IMR-90 (cell line): ENCODE measurements at regions of chr4 and their contacts with region 1.

Region 1: GRCh38 chr4:145481164-145481941 is at the start of gene SMAD1:
- DNase-seq: peak; percentile 82
- ATAC-seq: peak; percentile 89
- H3K4me3 ChIP-seq: peak within 1 kb of the TSS; percentile 56
- H3K27ac ChIP-seq: peak within 1 kb of the TSS; percentile 83
- H3K4me1 ChIP-seq: peaks cover 2% of the 10 kb centered on the region; the same call in 1 of the 2 replicates
- H3K27me3 ChIP-seq: no peaks in the 10 kb centered on the region
- CTCF ChIP-seq: no peak
- POLR2A ChIP-seq: peak; percentile 57; the same call in 1 of the 2 replicates
- RAD21 ChIP-seq: no peak
- total RNA-seq, gene SMAD1: 17.6 and 20.8 TPM in 2 replicates

Region 2: DNA sequence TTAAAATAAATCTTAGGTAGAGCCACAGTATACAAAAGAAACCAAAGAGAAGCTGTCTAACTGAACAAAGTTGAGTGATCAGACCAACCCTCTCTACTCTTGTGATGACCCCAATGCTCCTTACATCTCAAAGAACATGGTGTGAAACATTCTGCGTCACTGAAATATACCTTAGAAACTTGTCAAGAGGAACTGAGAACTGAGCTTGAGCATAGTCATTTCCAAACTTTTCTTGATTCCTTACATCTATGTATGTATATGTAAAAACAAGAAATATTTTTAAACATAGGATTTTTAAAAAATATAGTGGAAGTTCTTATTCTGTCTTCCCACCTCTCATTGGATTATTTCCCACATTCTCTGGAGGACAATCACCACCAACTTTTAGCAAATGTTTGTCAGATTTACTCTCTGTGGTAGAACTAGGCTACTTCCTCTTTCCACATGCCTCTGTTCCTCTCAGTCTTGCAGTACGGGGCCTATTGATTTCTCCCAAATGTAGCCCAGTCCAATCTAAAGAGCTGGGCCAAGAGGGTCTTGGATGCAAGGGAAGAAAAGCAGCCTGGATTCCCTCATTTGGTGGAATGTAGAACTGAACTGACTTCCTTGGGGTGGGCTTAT is 933.6 kb before region 1 on chr4:
- CTCF ChIA-PET with region 1: no interaction called
- POLR2A ChIA-PET with region 1: no interaction called
- dilution Hi-C with region 1: no loop called
- in situ Hi-C with region 1: no loop called
- intact Hi-C with region 1: no loop called
- DNase-seq: no peak
- ATAC-seq: no peak
- H3K4me3 ChIP-seq: no peak overlapping the region
- H3K27ac ChIP-seq: no peak overlapping the region
- H3K4me1 ChIP-seq: no peaks in the 10 kb centered on the region
- H3K27me3 ChIP-seq: no peaks in the 10 kb centered on the region; the same call in 1 of the 2 replicates
- CTCF ChIP-seq: no peak
- POLR2A ChIP-seq: no peak
- RAD21 ChIP-seq: no peak

Region 3: GRCh38 chr4:145180298-145181090 is 300.9 kb before region 1 on chr4 and contains the start of gene OTUD4:
- CTCF ChIA-PET with region 1: no interaction called
- POLR2A ChIA-PET with region 1: no interaction called
- dilution Hi-C with region 1: no loop called
- in situ Hi-C with region 1: no loop called
- intact Hi-C with region 1: loop called (anchors 2 kb)
- DNase-seq: peak; percentile 94
- ATAC-seq: peak; percentile 88
- H3K4me3 ChIP-seq: peak within 1 kb of the TSS; percentile 77
- H3K27ac ChIP-seq: peak within 1 kb of the TSS; percentile 88
- H3K4me1 ChIP-seq: no peaks in the 10 kb centered on the region; the same call in 1 of the 2 replicates
- H3K27me3 ChIP-seq: no peaks in the 10 kb centered on the region
- CTCF ChIP-seq: peak; percentile 22; the same call in 1 of the 2 replicates
- POLR2A ChIP-seq: no peak
- RAD21 ChIP-seq: no peak
- total RNA-seq, gene OTUD4: 12.4 and 16.9 TPM in 2 replicates

Region 4: DNA sequence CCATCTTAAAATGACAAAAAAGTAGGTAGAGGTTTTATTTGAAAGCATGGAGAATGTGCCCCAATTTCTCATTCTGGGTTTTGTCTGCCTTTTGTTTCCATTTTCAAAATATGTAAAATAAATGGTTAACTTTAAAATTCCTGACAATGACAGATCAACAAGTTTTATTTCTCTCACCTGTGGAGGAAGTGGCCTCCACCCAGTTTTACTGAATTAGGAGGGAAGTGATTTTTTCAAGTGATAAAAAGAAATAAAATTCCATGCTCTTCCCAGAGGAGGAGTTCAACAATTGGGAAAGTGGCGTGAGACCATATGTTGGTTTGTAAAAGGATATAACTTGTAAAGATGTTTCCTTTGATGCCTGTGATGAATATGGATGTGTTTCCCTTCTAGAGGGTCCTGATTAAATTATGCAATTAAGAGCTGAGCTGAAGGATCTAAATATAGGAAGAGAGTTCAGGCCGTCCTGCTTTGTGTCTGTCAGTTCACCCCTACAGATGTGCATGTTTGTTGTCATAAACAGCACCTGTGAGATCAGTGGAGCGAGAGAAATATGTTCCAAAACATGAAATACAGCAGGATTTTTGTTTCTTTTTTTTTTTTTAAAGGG is 19.8 kb after region 1 on chr4:
- CTCF ChIA-PET with region 1: interaction called, 10 read pairs
- POLR2A ChIA-PET with region 1: no interaction called
- dilution Hi-C with region 1: no loop called
- in situ Hi-C with region 1: no loop called
- intact Hi-C with region 1: no loop called
- DNase-seq: no peak
- ATAC-seq: no peak
- H3K4me3 ChIP-seq: no peak overlapping the region
- H3K27ac ChIP-seq: no peak overlapping the region
- H3K4me1 ChIP-seq: no peaks in the 10 kb centered on the region
- H3K27me3 ChIP-seq: no peaks in the 10 kb centered on the region
- CTCF ChIP-seq: no peak
- POLR2A ChIP-seq: no peak
- RAD21 ChIP-seq: no peak

Region 5: DNA sequence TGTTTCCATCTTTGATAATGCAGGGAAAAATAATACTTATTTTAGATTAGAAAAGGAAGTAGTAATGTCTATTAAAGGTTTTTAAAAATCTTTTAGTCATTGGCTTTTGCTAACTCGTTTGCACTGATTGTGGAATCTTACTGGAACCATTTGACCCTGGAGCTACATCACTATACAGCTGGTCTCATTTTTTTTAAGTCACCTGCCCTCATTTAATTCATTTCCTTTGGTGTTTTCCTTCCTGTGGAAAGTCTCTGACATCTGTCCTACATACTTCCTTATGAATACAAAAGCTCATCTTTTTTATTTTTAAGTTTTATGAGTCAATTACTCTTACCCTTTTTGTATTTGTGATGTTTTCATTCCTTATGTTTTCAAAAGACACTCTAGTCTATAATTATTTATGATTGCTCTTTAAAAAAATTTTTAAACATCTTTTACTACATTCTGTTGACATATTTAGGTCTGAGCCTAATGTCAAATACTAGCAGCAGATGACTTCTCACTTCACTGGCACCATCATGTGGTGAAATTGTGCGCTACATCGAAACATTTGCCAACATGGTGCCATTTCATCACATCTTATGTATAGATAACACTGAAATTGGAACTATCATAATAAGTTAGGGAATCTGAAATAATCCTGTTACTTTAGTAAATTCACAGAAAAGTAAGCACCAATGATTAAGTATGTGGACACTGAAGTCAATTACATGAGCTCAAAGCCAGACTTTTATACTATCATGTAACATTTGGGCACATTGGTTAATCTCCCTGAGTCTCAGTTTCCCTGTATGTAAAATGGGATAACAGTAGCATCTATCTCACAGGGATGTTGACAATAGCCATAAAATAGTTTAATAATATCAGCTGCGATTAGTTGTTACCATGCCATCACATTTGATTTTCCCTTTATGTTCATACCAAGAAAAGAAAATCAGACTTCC is 128.4 kb after region 1 on chr4:
- CTCF ChIA-PET with region 1: no interaction called
- POLR2A ChIA-PET with region 1: no interaction called
- dilution Hi-C with region 1: no loop called
- in situ Hi-C with region 1: loop called (anchors 10 kb)
- intact Hi-C with region 1: no loop called
- DNase-seq: peak; percentile 77
- ATAC-seq: peak; percentile 85
- H3K4me3 ChIP-seq: no peak overlapping the region
- H3K27ac ChIP-seq: no peak overlapping the region
- H3K4me1 ChIP-seq: no peaks in the 10 kb centered on the region
- H3K27me3 ChIP-seq: 0 out of 2 replicates have a peak, but pooled peaks cover 2% of the 10 kb centered on the region
- CTCF ChIP-seq: peak; percentile 84
- POLR2A ChIP-seq: no peak
- RAD21 ChIP-seq: peak; percentile 83

Region 6: GRCh38 chr4:145936142-145936996 is 455.0 kb after region 1 on chr4:
- CTCF ChIA-PET with region 1: no interaction called
- POLR2A ChIA-PET with region 1: no interaction called
- dilution Hi-C with region 1: no loop called
- in situ Hi-C with region 1: no loop called
- intact Hi-C with region 1: loop called (anchors 2 kb)
- DNase-seq: peak; percentile 73
- ATAC-seq: peak; percentile 44
- H3K4me3 ChIP-seq: peak overlapping the region; percentile 82
- H3K27ac ChIP-seq: peak overlapping the region; percentile 97
- H3K4me1 ChIP-seq: peaks cover 5% of the 10 kb centered on the region
- H3K27me3 ChIP-seq: no peaks in the 10 kb centered on the region
- CTCF ChIP-seq: peak; percentile 29
- POLR2A ChIP-seq: no peak
- RAD21 ChIP-seq: peak; percentile 10; the same call in 1 of the 2 replicates